Left cardiac atrium (tissue), 4 donors: ENCODE measurements at regions of chr7 and their contacts with region 1.

Region 1: DNA sequence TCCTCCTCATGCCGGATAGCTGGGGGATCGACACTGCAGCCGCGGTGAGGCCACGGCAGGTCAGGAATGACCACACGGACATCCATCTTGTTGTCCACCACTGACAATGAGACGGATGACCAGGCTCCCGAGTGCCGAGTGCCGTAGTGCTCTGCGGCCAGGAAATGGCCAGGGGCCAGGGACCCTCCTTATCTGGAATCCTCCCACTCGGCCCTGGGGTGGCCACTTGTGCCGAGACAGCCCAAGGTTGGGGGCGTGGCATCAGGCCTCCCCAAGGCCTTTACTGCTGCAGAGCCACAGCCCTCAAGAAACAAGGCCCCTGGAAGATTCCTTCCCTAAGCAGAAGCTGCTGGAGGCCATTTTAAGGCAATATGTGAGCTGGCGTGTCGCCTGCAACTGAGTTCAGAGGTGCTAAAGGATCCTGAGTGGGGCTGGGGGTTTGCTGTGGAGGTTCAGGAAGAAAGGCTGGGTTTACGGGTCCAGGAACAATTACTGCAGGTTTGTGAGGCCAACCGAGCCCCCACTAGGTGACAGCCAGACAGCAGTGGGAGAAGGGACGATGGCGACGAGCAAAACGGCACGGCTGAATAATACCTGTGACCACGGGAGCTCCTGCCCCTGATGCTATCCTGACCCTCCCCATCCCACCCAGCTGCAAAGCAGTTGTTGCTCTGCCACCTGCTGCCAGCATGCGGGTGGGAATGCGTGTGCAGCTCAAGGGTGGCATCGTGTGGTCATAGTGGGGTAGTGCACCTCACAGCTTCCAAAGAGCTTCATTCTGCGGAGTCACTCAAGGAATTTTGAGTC is 31.6 kb upstream of the LEP start:
- DNase-seq: peak; percentile 64
- ATAC-seq: peak; percentile 88 to 89

Region 2: DNA sequence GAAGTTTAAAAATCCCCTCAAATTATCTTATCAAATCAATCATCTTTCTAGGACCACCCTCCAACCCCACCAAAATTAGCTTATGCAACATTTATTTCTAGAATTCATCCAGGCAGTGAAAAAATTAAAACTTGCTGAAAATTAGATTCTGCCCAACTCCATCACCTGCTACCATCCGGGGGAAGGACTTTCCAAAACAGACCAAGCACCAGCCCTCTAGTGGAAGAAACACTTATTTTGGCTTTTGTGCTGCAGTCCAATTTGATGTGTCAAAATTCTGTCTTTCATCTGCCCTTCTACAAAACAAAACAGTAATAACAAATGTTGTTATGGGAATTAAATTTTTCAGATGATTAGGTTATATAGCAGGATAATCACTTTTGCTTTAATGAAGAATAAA is 659.2 kb before region 1 on chr7:
- intact Hi-C with region 1: loop called in 1 of 2 experiments (anchors 10 kb)
- DNase-seq: no peak
- ATAC-seq: no peak

Region 3: DNA sequence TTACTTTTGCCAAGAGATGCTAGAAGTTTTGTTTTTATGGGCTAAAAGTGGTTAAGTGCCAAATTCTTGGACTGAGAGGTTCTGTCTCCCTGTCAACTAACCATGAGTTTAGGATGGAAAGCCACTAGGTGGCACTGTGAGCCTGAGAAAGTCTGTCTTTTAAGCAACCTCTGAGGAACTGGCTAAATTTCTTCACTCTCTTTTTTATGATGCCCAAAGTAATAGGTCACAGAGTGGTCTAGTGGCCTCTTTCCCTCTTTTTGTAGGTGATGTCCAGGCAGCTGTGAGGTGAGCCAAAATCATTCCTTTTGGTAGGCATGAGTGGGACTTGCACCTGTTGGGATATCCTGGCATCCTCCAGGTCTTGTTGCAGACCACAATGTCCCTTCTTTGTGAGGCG is 500.6 kb before region 1 on chr7:
- intact Hi-C with region 1: loop called (anchors 2 to 5 kb)
- DNase-seq: peak; percentile 71
- ATAC-seq: peak; percentile 78 to 85

Region 4: GRCh38 chr7:127751490-127752448 is 457.7 kb before region 1 on chr7:
- intact Hi-C with region 1: no loop called
- DNase-seq: peak; percentile 25
- ATAC-seq: peak in 1 of 2 donors; percentile 38

Region 5: GRCh38 chr7:128031901-128032604 is 177.4 kb before region 1 on chr7:
- intact Hi-C with region 1: loop called in 1 of 2 experiments (anchors 5 kb)
- DNase-seq: peak; percentile 58
- ATAC-seq: peak; percentile 68 to 84

Region 6: GRCh38 chr7:128135515-128136214 is 73.8 kb before region 1 on chr7:
- intact Hi-C with region 1: loop called (anchors 2 to 5 kb)
- DNase-seq: peak; percentile 59
- ATAC-seq: peak; percentile 95 to 96

Region 7: GRCh38 chr7:128343554-128344430 is 134.4 kb after region 1 on chr7 and contains the start of gene RBM28:
- intact Hi-C with region 1: no loop called
- DNase-seq: peak; percentile 91
- ATAC-seq: peak; percentile 94 to 96
- total RNA-seq, gene RBM28: 25.4 to 33.9 TPM